Natural killer cell (primary cell): ENCODE measurements at regions of chr5 and their contacts with region 1.

Region 1: DNA sequence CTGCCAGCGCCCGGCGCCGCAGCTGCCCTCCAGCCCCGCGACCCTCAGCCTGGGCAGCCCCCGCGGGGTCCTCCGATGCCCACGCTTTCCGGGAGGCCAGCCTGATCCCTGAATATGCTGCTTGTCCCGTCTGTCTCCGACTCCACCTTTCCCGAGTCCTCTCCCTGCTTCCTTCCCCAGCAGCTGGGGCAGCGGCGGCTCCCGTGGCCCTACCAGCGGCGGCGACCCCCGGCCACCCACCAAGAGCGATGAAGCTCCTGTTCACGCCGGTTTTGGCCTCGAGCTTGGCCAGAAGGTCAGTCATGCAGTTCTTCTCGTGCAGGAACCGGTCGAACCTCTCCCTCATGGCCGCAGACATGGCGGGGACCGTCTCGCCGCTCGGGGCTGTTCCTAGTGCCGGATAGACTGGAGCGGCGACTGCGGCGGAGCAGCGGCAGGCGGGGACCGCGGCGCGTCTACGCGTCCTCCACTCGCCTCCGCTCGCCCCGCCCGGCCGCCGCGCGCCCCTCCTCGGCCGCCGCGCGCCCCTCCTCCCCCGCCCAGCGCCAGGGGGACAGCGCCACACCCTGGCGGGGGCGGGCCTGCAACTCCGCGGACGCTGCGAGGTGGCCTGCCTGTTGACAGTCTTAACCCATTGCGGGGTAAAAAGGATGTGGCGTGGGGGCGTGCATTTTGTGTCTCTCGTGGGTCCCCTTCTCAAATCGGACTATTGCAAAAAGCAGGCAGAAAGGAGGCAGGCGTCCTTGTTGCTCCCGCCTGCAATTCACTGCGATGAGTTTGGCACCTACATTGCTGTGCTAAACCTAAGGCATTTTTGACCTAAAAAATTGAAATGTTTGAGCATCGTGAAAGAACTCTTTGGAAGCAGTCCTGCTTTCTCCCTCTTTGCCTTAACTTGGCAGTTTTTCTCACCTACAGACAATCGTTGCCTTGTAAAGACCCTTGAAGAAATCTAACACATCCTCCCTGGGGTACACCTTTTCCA is at the start of gene REEP5:
- DNase-seq: peak; percentile 84 to 92
- ATAC-seq: peak; percentile 79 to 91 (median 83)
- H3K4me3 ChIP-seq: peak within 1 kb of the TSS; percentile 98
- H3K4me3 Mint-ChIP-seq: peak within 1 kb of the TSS; percentile 85
- H3K27ac ChIP-seq: peak within 1 kb of the TSS; percentile 91
- H3K27ac Mint-ChIP-seq: peak within 1 kb of the TSS; percentile 86 to 90
- H3K4me1 ChIP-seq: peaks cover 45% of the 10 kb centered on the region
- H3K4me1 Mint-ChIP-seq: peaks cover 61 to 63% of the 10 kb centered on the region in 2 donors
- H3K27me3 ChIP-seq: no peaks in the 10 kb centered on the region
- H3K27me3 Mint-ChIP-seq: no peaks in the 10 kb centered on the region
- CTCF ChIP-seq: peak; percentile 70
- total RNA-seq, gene REEP5: 42.8 to 46.5 (median 46.5) TPM

Region 2: DNA sequence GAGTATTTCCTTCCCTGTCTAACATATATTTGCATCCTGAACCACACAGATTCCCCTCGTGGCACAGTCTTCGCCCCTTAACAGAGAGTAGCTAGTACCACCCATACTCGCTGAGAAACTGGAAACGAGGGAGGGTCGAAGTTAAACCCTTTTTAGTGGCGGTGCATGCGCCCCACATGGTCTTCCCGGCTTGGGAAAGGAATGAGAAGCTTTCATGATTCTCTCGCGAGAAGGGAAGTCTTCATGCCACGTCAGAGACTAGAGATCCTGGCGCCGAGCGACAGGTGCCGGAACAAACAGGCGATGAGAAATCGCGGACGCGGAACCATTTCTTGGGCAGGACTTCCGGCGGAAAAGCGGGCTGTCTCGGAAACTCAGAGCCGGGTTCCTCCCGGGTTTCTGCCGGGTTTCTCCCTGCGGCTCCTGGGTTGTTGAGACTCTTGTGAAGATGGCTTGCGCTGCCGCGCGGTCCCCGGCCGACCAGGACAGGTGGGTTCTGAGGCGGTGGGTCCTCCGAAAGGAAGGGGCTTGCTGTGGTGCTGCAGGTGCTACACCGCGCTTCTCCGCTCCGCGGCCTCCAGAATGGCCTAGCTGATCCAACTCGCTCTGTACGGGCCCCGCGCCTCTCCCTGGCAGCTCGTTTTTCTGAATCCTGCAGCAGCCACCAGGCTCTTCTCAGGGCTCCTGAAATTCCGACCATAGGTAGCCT is 61.0 kb before region 1 on chr5 and contains the start of gene SRP19:
- intact Hi-C with region 1: loop called (anchors 1 kb)
- DNase-seq: peak; percentile 87 to 97
- ATAC-seq: peak; percentile 93 to 97 (median 96)
- H3K4me3 ChIP-seq: peak within 1 kb of the TSS; percentile 75
- H3K4me3 Mint-ChIP-seq: peak within 1 kb of the TSS; percentile 96
- H3K27ac ChIP-seq: peak within 1 kb of the TSS; percentile 78
- H3K27ac Mint-ChIP-seq: peak within 1 kb of the TSS; percentile 95 to 96
- H3K4me1 ChIP-seq: peaks cover 25% of the 10 kb centered on the region
- H3K4me1 Mint-ChIP-seq: peaks cover 24 to 35% of the 10 kb centered on the region in 2 donors
- H3K27me3 ChIP-seq: peaks cover 5% of the 10 kb centered on the region
- H3K27me3 Mint-ChIP-seq: peaks cover 9 to 24% of the 10 kb centered on the region in 2 donors
- CTCF ChIP-seq: no peak
- total RNA-seq, gene SRP19: 52.8 to 58.5 (median 54.7) TPM

Region 3: GRCh38 chr5:112958093-112959088 is 36.3 kb after region 1 on chr5:
- intact Hi-C with region 1: loop called (anchors 5 kb)
- DNase-seq: no peak
- ATAC-seq: no peak
- H3K4me3 ChIP-seq: no peak overlapping the region
- H3K4me3 Mint-ChIP-seq: no peak overlapping the region
- H3K27ac ChIP-seq: no peak overlapping the region
- H3K27ac Mint-ChIP-seq: no peak overlapping the region
- H3K4me1 ChIP-seq: no peaks in the 10 kb centered on the region
- H3K4me1 Mint-ChIP-seq: no peaks in the 10 kb centered on the region
- H3K27me3 ChIP-seq: no peaks in the 10 kb centered on the region
- H3K27me3 Mint-ChIP-seq: peaks cover 4 to 5% of the 10 kb centered on the region in 2 donors
- CTCF ChIP-seq: no peak

Region 4: GRCh38 chr5:112976432-112977309 is 54.5 kb after region 1 on chr5 and contains the start of gene DCP2:
- intact Hi-C with region 1: loop called (anchors 1 kb)
- DNase-seq: peak; percentile 94 to 98
- ATAC-seq: peak; percentile 96 to 99 (median 96)
- H3K4me3 ChIP-seq: peak within 1 kb of the TSS; percentile 90
- H3K4me3 Mint-ChIP-seq: peak within 1 kb of the TSS; percentile 98
- H3K27ac ChIP-seq: peak within 1 kb of the TSS; percentile 82
- H3K27ac Mint-ChIP-seq: peak within 1 kb of the TSS; percentile 87 to 94
- H3K4me1 ChIP-seq: peaks cover 12% of the 10 kb centered on the region
- H3K4me1 Mint-ChIP-seq: peaks cover 51 to 53% of the 10 kb centered on the region in 2 donors
- H3K27me3 ChIP-seq: no peaks in the 10 kb centered on the region
- H3K27me3 Mint-ChIP-seq: no peaks in the 10 kb centered on the region
- CTCF ChIP-seq: no peak
- total RNA-seq, gene DCP2: 69.3 to 82.9 (median 76.7) TPM

Region 5: GRCh38 chr5:113022661-113023060 is 100.5 kb after region 1 on chr5:
- intact Hi-C with region 1: loop called (anchors 10 kb)
- DNase-seq: peak in 1 of 2 donors; percentile 81
- ATAC-seq: peak; percentile 91 to 97 (median 96)
- H3K4me3 ChIP-seq: no peak overlapping the region
- H3K4me3 Mint-ChIP-seq: peak overlapping the region; percentile 82
- H3K27ac ChIP-seq: peak overlapping the region; percentile 73
- H3K27ac Mint-ChIP-seq: peak overlapping the region; percentile 91 to 94
- H3K4me1 ChIP-seq: peaks cover 6% of the 10 kb centered on the region
- H3K4me1 Mint-ChIP-seq: peaks cover 34 to 56% of the 10 kb centered on the region in 2 donors
- H3K27me3 ChIP-seq: no peaks in the 10 kb centered on the region
- H3K27me3 Mint-ChIP-seq: no peaks in the 10 kb centered on the region
- CTCF ChIP-seq: no peak

Region 6: GRCh38 chr5:113166852-113167366 is 244.8 kb after region 1 on chr5:
- intact Hi-C with region 1: no loop called
- DNase-seq: no peak
- ATAC-seq: no peak
- H3K4me3 ChIP-seq: no peak overlapping the region
- H3K4me3 Mint-ChIP-seq: no peak overlapping the region
- H3K27ac ChIP-seq: no peak overlapping the region
- H3K27ac Mint-ChIP-seq: no peak overlapping the region
- H3K4me1 ChIP-seq: no peaks in the 10 kb centered on the region
- H3K4me1 Mint-ChIP-seq: no peaks in the 10 kb centered on the region
- H3K27me3 ChIP-seq: peaks cover 3% of the 10 kb centered on the region
- H3K27me3 Mint-ChIP-seq: peaks cover 15 to 58% of the 10 kb centered on the region in 2 donors
- CTCF ChIP-seq: no peak

Region 7: GRCh38 chr5:113513384-113514288 is 591.5 kb after region 1 on chr5 and contains the start of gene YTHDC2:
- intact Hi-C with region 1: loop called (anchors 5 kb)
- DNase-seq: peak; percentile 86 to 94
- ATAC-seq: peak; percentile 93 to 95 (median 93)
- H3K4me3 ChIP-seq: peak within 1 kb of the TSS; percentile 67
- H3K4me3 Mint-ChIP-seq: peak within 1 kb of the TSS; percentile 90
- H3K27ac ChIP-seq: peak within 1 kb of the TSS; percentile 94
- H3K27ac Mint-ChIP-seq: peak within 1 kb of the TSS; percentile 89 to 91
- H3K4me1 ChIP-seq: peaks cover 8% of the 10 kb centered on the region
- H3K4me1 Mint-ChIP-seq: peaks cover 32 to 37% of the 10 kb centered on the region in 2 donors
- H3K27me3 ChIP-seq: peaks cover under 1% of the 10 kb centered on the region
- H3K27me3 Mint-ChIP-seq: peaks cover 14 to 30% of the 10 kb centered on the region in 2 donors
- CTCF ChIP-seq: no peak
- total RNA-seq, gene YTHDC2: 37.7 to 38.8 (median 38.0) TPM